Activated B cell treated with CpG ODN at 0.5 μM for 24 hours (primary cell): ENCODE measurements at regions of chr6 and their contacts with region 1.

Region 1: DNA sequence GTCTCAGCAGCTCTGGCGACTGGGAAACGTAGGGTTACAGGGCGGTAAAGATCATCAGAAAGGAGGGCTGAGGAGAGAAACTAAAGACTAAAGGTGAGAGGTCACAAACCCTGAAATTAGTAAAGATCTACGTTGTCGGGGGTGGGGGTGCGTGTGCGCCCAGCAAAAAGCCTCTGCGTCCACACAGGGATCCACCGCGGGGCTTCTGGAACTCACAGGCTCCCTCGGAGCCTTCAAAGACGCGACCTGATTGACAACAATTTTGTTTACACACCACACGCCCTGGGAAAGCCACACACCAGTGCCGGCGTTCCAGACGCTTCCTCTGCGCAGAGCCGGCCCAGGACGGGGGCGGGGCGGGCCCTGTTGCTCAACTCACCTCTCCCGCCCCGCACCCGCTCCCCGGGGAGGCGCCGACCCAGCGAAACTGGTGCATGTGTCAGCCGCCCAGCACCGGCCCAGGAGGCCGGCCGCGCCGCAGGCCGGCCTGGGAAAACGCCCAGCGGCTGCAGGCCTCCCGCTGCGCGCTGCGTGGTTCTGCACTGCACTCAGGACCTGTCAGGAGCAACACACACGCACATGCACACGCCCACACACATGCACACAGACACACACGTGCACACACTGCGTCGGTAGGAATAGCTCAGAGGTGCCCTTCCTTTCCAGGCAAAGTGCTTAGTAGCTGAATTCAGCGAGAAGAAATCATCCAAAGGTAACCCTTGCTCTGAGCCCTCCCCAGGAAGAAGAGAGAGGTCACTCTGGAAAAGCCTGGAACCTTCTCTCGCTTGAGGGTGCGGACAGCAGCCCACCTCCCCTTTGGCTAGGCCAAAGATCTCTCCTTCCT is 57.2 kb upstream of the ARID1B start:
- DNase-seq: peak; percentile 78
- ATAC-seq: peak; percentile 81
- H3K4me3 Mint-ChIP-seq: peak overlapping the region; percentile 82
- H3K27ac Mint-ChIP-seq: peak overlapping the region; percentile 95
- H3K4me1 Mint-ChIP-seq: peaks cover 52% of the 10 kb centered on the region
- H3K27me3 Mint-ChIP-seq: no peaks in the 10 kb centered on the region
- CTCF ChIP-seq: no peak

Region 2: DNA sequence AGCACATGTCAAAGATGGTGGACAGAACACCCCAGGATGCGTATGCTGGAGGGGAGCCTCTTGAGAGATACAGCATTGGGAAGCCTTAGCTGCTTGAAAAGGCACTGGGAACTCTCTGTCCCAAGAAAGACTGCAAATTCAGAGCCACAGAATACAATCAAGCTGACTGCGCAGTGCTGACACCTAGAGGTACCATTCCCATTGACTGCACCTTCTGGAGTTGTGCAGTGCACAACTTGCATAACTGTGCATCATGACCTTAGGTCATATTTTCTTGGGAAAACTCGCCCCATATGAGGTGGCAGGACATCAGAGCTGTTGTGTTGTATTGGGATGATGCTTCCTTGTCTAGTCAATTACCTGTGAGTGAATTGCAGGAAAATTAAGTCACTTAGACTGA is 617.8 kb before region 1 on chr6:
- CTCF ChIA-PET with region 1: no interaction called
- POLR2A ChIA-PET with region 1: no interaction called
- intact Hi-C with region 1: no loop called
- DNase-seq: no peak
- ATAC-seq: no peak
- H3K4me3 Mint-ChIP-seq: no peak overlapping the region
- H3K27ac Mint-ChIP-seq: no peak overlapping the region
- H3K4me1 Mint-ChIP-seq: no peaks in the 10 kb centered on the region
- H3K27me3 Mint-ChIP-seq: no peaks in the 10 kb centered on the region
- CTCF ChIP-seq: no peak

Region 3: GRCh38 chr6:156741287-156742073 is 21.5 kb after region 1 on chr6:
- CTCF ChIA-PET with region 1: interaction called, 3 read pairs
- POLR2A ChIA-PET with region 1: interaction called, 3 read pairs
- intact Hi-C with region 1: loop called (anchors 1 kb)
- DNase-seq: no peak
- ATAC-seq: peak; percentile 86
- H3K4me3 Mint-ChIP-seq: peak overlapping the region; percentile 24
- H3K27ac Mint-ChIP-seq: peak overlapping the region; percentile 77
- H3K4me1 Mint-ChIP-seq: peaks cover 11% of the 10 kb centered on the region
- H3K27me3 Mint-ChIP-seq: no peaks in the 10 kb centered on the region
- CTCF ChIP-seq: no peak

Region 4: GRCh38 chr6:156767603-156768467 is 47.9 kb after region 1 on chr6:
- CTCF ChIA-PET with region 1: interaction called, 3 read pairs
- POLR2A ChIA-PET with region 1: interaction called, 17 read pairs
- intact Hi-C with region 1: no loop called
- DNase-seq: no peak
- ATAC-seq: peak; percentile 91
- H3K4me3 Mint-ChIP-seq: peak overlapping the region; percentile 30
- H3K27ac Mint-ChIP-seq: peak overlapping the region; percentile 84
- H3K4me1 Mint-ChIP-seq: peaks cover 28% of the 10 kb centered on the region
- H3K27me3 Mint-ChIP-seq: no peaks in the 10 kb centered on the region
- CTCF ChIP-seq: no peak